Activated naive CD4-positive, alpha-beta T cell treated with anti-CD3 and anti-CD28 coated beads, Interleukin-2, amount 10 ng/mL, durations not matched to agents 7 days and 5 days (primary cell): ENCODE measurements at regions of chr3 and their contacts with region 1.

Region 1: GRCh38 chr3:186849374-186849975 is 7.0 kb downstream of the ADIPOQ start:
- DNase-seq: no peak
- H3K4me3 Mint-ChIP-seq: no peak overlapping the region
- H3K27ac Mint-ChIP-seq: no peak overlapping the region
- H3K4me1 Mint-ChIP-seq: peaks cover 14% of the 10 kb centered on the region
- H3K27me3 Mint-ChIP-seq: peaks cover 20% of the 10 kb centered on the region

Region 2: GRCh38 chr3:186930641-186931531 is 81.4 kb after region 1 on chr3:
- CTCF ChIA-PET with region 1: interaction called, 56 read pairs
- DNase-seq: peak; percentile 86
- H3K4me3 Mint-ChIP-seq: peak overlapping the region; percentile 83
- H3K27ac Mint-ChIP-seq: peak overlapping the region; percentile 87
- H3K4me1 Mint-ChIP-seq: peaks cover 30% of the 10 kb centered on the region
- H3K27me3 Mint-ChIP-seq: peaks cover 4% of the 10 kb centered on the region

Region 3: GRCh38 chr3:187066228-187066995 is 216.9 kb after region 1 on chr3:
- CTCF ChIA-PET with region 1: interaction called, 12 read pairs
- DNase-seq: peak; percentile 68
- H3K4me3 Mint-ChIP-seq: no peak overlapping the region
- H3K27ac Mint-ChIP-seq: peak overlapping the region; percentile 55
- H3K4me1 Mint-ChIP-seq: peaks cover 52% of the 10 kb centered on the region
- H3K27me3 Mint-ChIP-seq: no peaks in the 10 kb centered on the region

Region 4: DNA sequence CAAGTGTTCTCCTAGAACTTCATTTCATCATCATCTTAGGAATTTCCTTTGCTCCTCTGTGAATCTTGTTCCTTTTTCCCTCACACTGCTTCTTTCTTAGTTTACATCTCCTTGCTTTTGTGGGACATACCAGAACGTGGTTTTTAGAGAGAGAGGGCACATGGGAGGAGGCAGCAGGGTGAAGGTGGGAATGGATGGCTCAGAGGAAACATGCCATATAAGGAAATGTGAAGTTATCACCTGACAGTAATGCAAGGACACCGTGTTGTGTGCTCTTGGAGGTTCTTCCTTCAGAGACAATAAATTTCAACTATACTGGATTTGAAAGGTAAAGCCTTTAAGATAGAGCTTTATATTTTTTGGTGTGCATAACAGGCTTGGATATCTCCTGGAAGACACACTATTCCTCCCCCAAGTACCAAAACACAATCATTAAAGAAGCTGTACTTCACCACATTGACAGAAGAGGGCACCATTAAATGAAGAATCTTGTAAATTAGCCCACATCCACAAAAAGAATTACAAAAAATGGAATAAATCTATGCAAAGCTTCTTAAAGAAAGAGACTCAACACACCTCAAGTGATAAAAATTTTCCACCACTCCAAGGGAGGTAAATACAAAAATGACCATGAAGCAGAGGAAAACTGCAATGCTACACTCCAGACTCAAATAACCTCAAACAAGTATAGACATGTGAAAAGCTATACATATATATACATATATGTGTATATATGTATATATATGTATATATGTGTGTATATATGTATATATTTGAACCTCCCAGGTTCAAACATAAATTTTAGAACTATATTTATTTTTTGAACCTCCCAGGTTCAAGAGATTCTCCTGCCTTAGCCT is 263.7 kb after region 1 on chr3:
- CTCF ChIA-PET with region 1: interaction called, 48 read pairs
- DNase-seq: no peak
- H3K4me3 Mint-ChIP-seq: no peak overlapping the region
- H3K27ac Mint-ChIP-seq: no peak overlapping the region
- H3K4me1 Mint-ChIP-seq: peaks cover 10% of the 10 kb centered on the region
- H3K27me3 Mint-ChIP-seq: no peaks in the 10 kb centered on the region

Region 5: GRCh38 chr3:187164885-187165543 is 315.5 kb after region 1 on chr3:
- CTCF ChIA-PET with region 1: interaction called, 106 read pairs
- DNase-seq: peak; percentile 40
- H3K4me3 Mint-ChIP-seq: no peak overlapping the region
- H3K27ac Mint-ChIP-seq: no peak overlapping the region
- H3K4me1 Mint-ChIP-seq: peaks cover 4% of the 10 kb centered on the region
- H3K27me3 Mint-ChIP-seq: peaks cover 34% of the 10 kb centered on the region